PC-3 (cell line): ENCODE measurements at regions of chr2 and their contacts with region 1.

Region 1: GRCh38 chr2:71923887-71924533 is 223.7 kb downstream of the CYP26B1 start:
- DNase-seq: peak; percentile 85
- ATAC-seq: peak; percentile 94
- H3K4me3 ChIP-seq: no peak overlapping the region
- H3K27ac ChIP-seq: no peak overlapping the region
- H3K4me1 ChIP-seq: peaks cover 6% of the 10 kb centered on the region
- H3K27me3 ChIP-seq: no peaks in the 10 kb centered on the region
- CTCF ChIP-seq: peak; percentile 92

Region 2: GRCh38 chr2:71545572-71546274 is 378.3 kb before region 1 on chr2:
- CTCF ChIA-PET with region 1: no interaction called
- POLR2A ChIA-PET with region 1: no interaction called
- intact Hi-C with region 1: loop called (anchors 10 kb)
- DNase-seq: peak; percentile 75
- ATAC-seq: peak; percentile 93
- H3K4me3 ChIP-seq: peak overlapping the region; percentile 64
- H3K27ac ChIP-seq: no peak overlapping the region
- H3K4me1 ChIP-seq: peaks cover 9% of the 10 kb centered on the region; the same call in 1 of the 2 replicates
- H3K27me3 ChIP-seq: no peaks in the 10 kb centered on the region
- CTCF ChIP-seq: peak; percentile 95

Region 3: GRCh38 chr2:71995067-71995665 is 71.2 kb after region 1 on chr2:
- CTCF ChIA-PET with region 1: no interaction called
- POLR2A ChIA-PET with region 1: no interaction called
- intact Hi-C with region 1: loop called (anchors 5 kb)
- DNase-seq: peak; percentile 59
- ATAC-seq: no peak; the same call in 1 of the 2 replicates
- H3K4me3 ChIP-seq: no peak overlapping the region
- H3K27ac ChIP-seq: no peak overlapping the region
- H3K4me1 ChIP-seq: no peaks in the 10 kb centered on the region
- H3K27me3 ChIP-seq: peaks cover 22% of the 10 kb centered on the region
- CTCF ChIP-seq: peak; percentile 84

Region 4: GRCh38 chr2:72115552-72116546 is 191.8 kb after region 1 on chr2:
- CTCF ChIA-PET with region 1: interaction called, 11 read pairs
- POLR2A ChIA-PET with region 1: no interaction called
- intact Hi-C with region 1: no loop called
- DNase-seq: peak; percentile 99
- ATAC-seq: peak; percentile 85
- H3K4me3 ChIP-seq: peak overlapping the region; percentile 47
- H3K27ac ChIP-seq: peak overlapping the region; percentile 96
- H3K4me1 ChIP-seq: peaks cover 41% of the 10 kb centered on the region
- H3K27me3 ChIP-seq: no peaks in the 10 kb centered on the region
- CTCF ChIP-seq: peak; percentile 69

Region 5: GRCh38 chr2:72325592-72326422 is 401.8 kb after region 1 on chr2:
- CTCF ChIA-PET with region 1: no interaction called
- POLR2A ChIA-PET with region 1: no interaction called
- intact Hi-C with region 1: loop called (anchors 10 kb)
- DNase-seq: peak; percentile 52
- ATAC-seq: no peak
- H3K4me3 ChIP-seq: no peak overlapping the region
- H3K27ac ChIP-seq: no peak overlapping the region
- H3K4me1 ChIP-seq: no peaks in the 10 kb centered on the region
- H3K27me3 ChIP-seq: no peaks in the 10 kb centered on the region
- CTCF ChIP-seq: peak; percentile 78

Region 6: GRCh38 chr2:72579591-72580180 is 655.7 kb after region 1 on chr2:
- CTCF ChIA-PET with region 1: no interaction called
- POLR2A ChIA-PET with region 1: no interaction called
- intact Hi-C with region 1: loop called (anchors 5 kb)
- DNase-seq: peak; percentile 68
- ATAC-seq: peak; percentile 31; the same call in 1 of the 2 replicates
- H3K4me3 ChIP-seq: no peak overlapping the region
- H3K27ac ChIP-seq: no peak overlapping the region
- H3K4me1 ChIP-seq: no peaks in the 10 kb centered on the region
- H3K27me3 ChIP-seq: no peaks in the 10 kb centered on the region
- CTCF ChIP-seq: peak; percentile 84

Region 7: GRCh38 chr2:72745679-72746368 is 821.8 kb after region 1 on chr2:
- CTCF ChIA-PET with region 1: interaction called, 3 read pairs
- POLR2A ChIA-PET with region 1: no interaction called
- intact Hi-C with region 1: loop called (anchors 2 kb)
- DNase-seq: peak; percentile 85
- ATAC-seq: peak; percentile 57
- H3K4me3 ChIP-seq: no peak overlapping the region
- H3K27ac ChIP-seq: no peak overlapping the region
- H3K4me1 ChIP-seq: peaks cover 19% of the 10 kb centered on the region
- H3K27me3 ChIP-seq: no peaks in the 10 kb centered on the region
- CTCF ChIP-seq: peak; percentile 92